ENCODE measurements at regions of chr1 and their contacts with region 1.

Region 1: DNA sequence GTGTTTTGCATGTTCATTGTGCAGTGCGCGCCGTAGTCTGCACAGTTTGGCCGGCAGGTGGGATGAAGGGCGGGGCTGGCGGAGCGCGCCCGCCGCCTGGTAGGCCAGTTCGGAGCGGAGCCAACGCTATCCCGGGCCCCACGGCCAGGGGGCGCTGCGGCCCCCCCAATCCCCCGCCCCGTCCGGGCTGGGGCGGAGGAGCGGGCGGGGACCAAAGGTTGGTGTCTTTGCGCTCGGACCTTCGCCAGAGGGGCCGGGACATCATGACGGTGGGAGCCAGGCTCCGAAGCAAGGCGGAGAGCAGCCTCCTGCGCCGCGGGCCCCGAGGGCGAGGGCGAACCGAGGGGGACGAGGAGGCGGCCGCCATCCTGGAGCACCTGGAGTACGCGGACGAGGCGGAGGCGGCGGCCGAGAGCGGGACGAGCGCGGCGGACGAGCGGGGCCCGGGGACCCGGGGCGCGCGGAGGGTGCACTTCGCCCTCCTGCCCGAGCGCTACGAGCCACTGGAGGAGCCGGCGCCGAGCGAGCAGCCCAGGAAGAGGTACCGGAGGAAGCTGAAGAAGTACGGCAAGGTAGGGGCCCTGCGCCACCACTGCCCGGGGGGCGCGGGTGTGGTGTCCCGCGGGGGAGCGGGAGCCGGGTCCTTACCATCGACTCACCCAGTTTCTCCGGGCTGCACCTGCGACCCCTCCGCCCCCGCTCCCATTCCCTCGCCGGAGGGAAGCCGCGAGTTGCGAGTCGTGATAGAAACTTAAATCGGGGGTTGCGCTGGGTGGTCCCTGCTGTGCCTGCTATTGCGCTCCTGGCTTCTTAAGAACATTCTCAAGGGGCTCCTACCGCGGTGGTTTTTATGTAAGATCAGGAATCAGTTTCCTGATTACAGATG is at the start of gene C1orf115:
- DNase-seq: peak; percentile 93
- H3K4me3 ChIP-seq: peak within 1 kb of the TSS; percentile 70 to 84 (median 73)
- H3K27ac ChIP-seq: peak within 1 kb of the TSS; percentile 60 to 71 (median 67)
- H3K4me1 ChIP-seq: peaks cover 4 to 24% (median 18%) of the 10 kb centered on the region in 4 donors
- H3K27me3 ChIP-seq: no peaks in the 10 kb centered on the region
- CTCF ChIP-seq: peak; percentile 87 to 98 (median 97)
- EP300 ChIP-seq: no peak
- POLR2A ChIP-seq: no peak
- total RNA-seq, gene C1orf115: 10.8 to 24.0 (median 12.4) TPM

Region 2: DNA sequence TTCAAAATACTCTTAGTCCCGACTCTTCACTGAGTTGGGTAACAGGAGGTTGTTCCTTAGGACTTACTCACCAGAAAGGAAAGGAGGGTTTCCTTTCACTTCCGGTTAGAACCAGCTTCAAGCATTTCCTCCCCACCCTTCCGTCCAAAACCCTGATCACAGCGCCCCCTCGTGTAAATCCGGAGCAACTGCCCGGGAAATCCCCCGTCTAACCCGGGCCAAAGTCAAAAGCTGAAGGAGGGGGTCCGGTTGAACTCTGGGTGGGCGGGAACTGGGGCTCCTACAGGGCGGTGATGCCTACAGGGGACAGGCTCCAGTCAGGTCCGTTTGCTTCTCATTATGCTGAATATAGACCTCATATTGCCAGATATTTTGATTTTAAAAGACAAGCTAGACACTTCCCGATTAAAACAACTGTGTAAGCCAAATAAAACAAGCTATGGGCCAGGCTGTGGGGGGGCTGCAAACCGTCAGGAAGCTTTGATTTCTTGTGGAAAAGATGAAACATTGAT is 42.8 kb after region 1 on chr1:
- intact Hi-C with region 1: loop called (anchors 2 kb)
- DNase-seq: peak; percentile 92
- H3K4me3 ChIP-seq: peak overlapping the region; percentile 32 to 48 (median 38)
- H3K27ac ChIP-seq: peak overlapping the region; percentile 55 to 72 (median 69)
- H3K4me1 ChIP-seq: peaks cover 0 to 22% (median 16%) of the 10 kb centered on the region in 4 donors
- H3K27me3 ChIP-seq: no peaks in the 10 kb centered on the region
- CTCF ChIP-seq: peak; percentile 83 to 96 (median 92)
- EP300 ChIP-seq: no peak
- POLR2A ChIP-seq: no peak

Region 3: DNA sequence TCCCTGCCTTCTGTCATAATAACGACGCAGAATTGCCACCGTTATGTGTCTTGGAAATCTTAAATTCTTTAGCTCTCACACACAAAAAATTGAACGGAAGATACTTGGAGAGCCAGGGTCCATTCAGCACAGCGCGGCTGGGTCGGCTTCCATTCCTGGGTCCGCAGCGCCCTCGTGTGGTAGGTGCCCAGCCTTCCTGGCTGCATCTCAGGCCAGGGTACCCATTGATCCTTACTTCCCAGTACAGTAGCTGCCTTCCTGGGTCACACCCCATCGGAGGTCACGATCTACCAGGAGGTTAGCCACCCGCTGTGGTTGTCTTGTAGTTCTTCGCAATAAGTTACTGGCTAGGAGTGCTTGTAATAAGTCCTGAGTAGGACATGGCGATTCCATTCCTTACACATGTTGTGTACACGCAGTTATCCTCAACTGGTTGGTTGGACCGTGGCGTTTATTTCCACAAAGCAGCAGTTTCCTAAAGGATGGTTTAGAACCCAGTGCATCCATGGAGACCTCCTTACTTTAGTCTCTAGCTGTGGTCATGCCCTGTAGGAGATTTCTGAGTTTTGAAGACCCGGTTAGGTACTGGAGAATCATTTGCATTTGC is 86.4 kb after region 1 on chr1:
- intact Hi-C with region 1: loop called (anchors 5 kb)
- DNase-seq: peak; percentile 95
- H3K4me3 ChIP-seq: no peak overlapping the region
- H3K27ac ChIP-seq: no peak overlapping the region
- H3K4me1 ChIP-seq: peaks cover 3 to 8% (median 6%) of the 10 kb centered on the region in 4 donors
- H3K27me3 ChIP-seq: no peaks in the 10 kb centered on the region
- CTCF ChIP-seq: peak; percentile 82 to 93 (median 91)
- EP300 ChIP-seq: no peak
- POLR2A ChIP-seq: no peak

Measured in esophagus muscularis mucosa (tissue), 4 donors.